PC-3 (cell line): ENCODE measurements at regions of chr12 and their contacts with region 1.

Region 1: DNA sequence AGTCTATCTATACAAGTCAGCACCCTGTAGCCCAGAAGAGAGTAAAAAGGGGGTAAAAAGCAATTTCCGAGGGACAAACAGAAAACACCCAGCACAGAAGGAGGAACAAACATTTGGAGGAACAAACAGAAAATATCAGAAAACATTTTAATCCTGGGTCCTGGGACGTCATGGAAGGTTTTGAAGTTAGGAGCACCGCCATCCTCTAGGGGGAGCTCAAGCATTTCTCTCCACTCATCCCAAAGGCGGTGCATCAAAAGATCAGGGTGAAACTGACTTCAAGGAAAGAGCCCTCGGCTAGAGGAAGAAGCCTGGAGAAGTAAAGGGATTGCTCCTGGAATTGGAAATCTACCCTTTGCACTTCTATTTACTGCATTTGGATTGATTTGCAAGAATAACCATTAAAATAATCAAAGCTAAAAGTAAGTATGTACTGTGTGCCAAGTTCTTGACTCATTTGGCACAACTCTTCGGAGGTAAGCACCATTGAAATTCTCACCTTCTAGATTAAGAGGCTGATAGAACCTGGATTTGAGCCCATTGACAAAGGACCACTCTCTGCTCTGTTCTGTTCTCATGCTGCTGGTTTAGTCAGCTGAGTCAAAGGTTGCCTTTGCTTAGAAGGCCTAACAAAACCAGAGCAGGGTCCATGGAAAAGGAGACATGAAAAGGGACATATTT is 17.2 kb upstream of the POC1B start:
- DNase-seq: peak; percentile 91
- ATAC-seq: peak; percentile 94
- H3K4me3 ChIP-seq: no peak overlapping the region
- H3K27ac ChIP-seq: peak overlapping the region; percentile 7
- H3K4me1 ChIP-seq: peaks cover 6% of the 10 kb centered on the region
- H3K27me3 ChIP-seq: no peaks in the 10 kb centered on the region
- CTCF ChIP-seq: peak; percentile 96

Region 2: DNA sequence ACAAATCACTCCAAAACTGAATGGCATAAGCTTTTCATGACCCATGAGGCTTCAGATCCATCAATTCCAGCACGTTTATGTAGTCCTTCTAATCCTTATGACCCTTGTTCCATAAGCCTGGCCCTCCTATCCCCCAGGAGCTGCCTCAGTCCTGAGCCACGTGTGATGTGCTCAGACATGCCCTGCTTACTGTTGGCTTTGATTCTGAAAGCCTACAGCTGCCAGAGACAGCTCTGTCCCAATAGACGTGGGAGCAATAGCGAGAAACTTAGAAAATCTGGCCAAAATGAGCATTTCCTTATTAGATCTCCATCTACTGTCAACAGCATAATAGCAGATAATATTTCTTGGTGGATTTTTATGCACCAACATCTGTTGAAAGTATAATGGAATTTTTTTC is 223.9 kb before region 1 on chr12:
- CTCF ChIA-PET with region 1: no interaction called
- POLR2A ChIA-PET with region 1: no interaction called
- intact Hi-C with region 1: no loop called
- DNase-seq: no peak
- ATAC-seq: no peak
- H3K4me3 ChIP-seq: no peak overlapping the region
- H3K27ac ChIP-seq: no peak overlapping the region
- H3K4me1 ChIP-seq: no peaks in the 10 kb centered on the region
- H3K27me3 ChIP-seq: no peaks in the 10 kb centered on the region
- CTCF ChIP-seq: no peak

Region 3: DNA sequence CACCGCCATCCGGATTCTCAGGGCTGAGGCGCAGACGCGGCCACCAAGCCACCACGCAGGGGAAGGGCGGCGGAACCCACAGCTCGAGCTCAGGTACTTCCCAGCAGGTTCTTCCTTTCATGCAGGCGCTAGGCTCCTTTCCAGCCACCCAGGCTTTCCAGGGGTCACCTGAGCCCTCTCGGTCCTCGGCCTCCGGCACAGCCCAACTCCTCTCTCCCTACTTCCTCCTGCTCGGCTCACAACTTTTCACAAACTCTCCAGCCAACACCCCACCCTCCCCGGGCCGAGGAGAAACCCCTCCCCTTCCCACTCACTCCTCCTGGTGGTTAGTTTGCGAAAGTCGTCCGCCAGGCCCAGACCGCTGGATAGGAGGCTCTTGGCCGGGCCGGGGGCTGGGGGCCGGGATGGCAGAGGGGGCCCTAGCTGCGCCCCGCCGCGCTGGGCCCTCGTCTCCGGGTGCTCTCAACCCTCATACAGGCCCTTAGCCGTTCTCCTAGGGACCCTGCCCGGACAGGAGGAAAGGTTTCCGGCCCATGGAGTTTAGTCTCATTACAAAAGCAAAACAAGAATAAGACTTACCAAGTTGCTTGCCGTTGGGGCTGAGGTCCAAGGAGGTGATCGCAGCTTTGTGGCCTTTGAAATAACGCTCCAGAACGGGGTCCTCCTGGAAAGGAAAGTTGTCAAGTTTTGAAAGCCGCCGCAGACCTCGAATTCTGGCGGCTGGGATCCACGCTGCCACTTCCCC is 18.3 kb before region 1 on chr12 and contains the start of gene GALNT4:
- CTCF ChIA-PET with region 1: no interaction called
- POLR2A ChIA-PET with region 1: no interaction called
- intact Hi-C with region 1: no loop called
- DNase-seq: peak; percentile 90
- ATAC-seq: peak; percentile 69
- H3K4me3 ChIP-seq: peak within 1 kb of the TSS; percentile 91
- H3K27ac ChIP-seq: peak within 1 kb of the TSS; percentile 81
- H3K4me1 ChIP-seq: peaks cover 48% of the 10 kb centered on the region
- H3K27me3 ChIP-seq: no peaks in the 10 kb centered on the region
- CTCF ChIP-seq: peak; percentile 75
- total RNA-seq, gene GALNT4: 6.8 and 8.1 TPM in 2 replicates

Region 4: GRCh38 chr12:89556976-89557375 is 13.9 kb after region 1 on chr12:
- CTCF ChIA-PET with region 1: no interaction called
- POLR2A ChIA-PET with region 1: no interaction called
- intact Hi-C with region 1: no loop called
- DNase-seq: peak; percentile 53
- ATAC-seq: peak; percentile 31; the same call in 1 of the 2 replicates
- H3K4me3 ChIP-seq: no peak overlapping the region
- H3K27ac ChIP-seq: no peak overlapping the region
- H3K4me1 ChIP-seq: no peaks in the 10 kb centered on the region; the same call in 1 of the 2 replicates
- H3K27me3 ChIP-seq: no peaks in the 10 kb centered on the region
- CTCF ChIP-seq: no peak

Region 5: GRCh38 chr12:89825591-89826449 is 282.8 kb after region 1 on chr12:
- CTCF ChIA-PET with region 1: no interaction called
- POLR2A ChIA-PET with region 1: no interaction called
- intact Hi-C with region 1: no loop called
- DNase-seq: peak; percentile 90
- ATAC-seq: peak; percentile 86
- H3K4me3 ChIP-seq: peak overlapping the region; percentile 13; the same call in 1 of the 2 replicates
- H3K27ac ChIP-seq: peak overlapping the region; percentile 72
- H3K4me1 ChIP-seq: peaks cover 23% of the 10 kb centered on the region
- H3K27me3 ChIP-seq: no peaks in the 10 kb centered on the region
- CTCF ChIP-seq: no peak

Region 6: GRCh38 chr12:90102957-90103652 is 560.1 kb after region 1 on chr12:
- CTCF ChIA-PET with region 1: no interaction called
- POLR2A ChIA-PET with region 1: no interaction called
- intact Hi-C with region 1: loop called (anchors 2 kb)
- DNase-seq: peak; percentile 61
- ATAC-seq: peak; percentile 73
- H3K4me3 ChIP-seq: no peak overlapping the region
- H3K27ac ChIP-seq: no peak overlapping the region
- H3K4me1 ChIP-seq: peaks cover 44% of the 10 kb centered on the region
- H3K27me3 ChIP-seq: no peaks in the 10 kb centered on the region
- CTCF ChIP-seq: peak; percentile 83

Region 7: DNA sequence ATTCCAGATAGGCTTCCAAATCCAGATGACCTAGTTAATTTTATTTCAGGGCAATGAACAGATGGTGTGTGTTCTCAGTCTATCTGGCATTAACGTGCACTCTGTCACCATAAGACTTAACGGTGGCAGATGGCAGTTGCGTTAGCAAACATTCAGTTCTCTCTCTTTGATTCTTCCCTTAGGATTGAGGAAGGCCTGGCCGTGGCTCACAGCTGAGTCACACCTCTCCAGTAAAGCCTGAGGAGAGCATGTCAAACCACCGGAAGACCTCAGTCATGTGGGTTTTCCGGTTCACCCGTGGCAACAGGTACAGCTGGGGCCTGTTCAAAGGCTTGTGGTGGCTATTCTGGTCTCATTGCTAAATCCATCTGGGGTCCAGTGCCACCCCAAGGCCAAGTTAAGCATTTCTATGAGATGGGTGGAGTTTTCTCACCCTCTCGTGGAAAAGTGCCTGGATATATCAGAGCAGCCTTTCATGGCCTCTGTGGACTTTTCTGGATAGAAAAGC is 710.7 kb after region 1 on chr12:
- CTCF ChIA-PET with region 1: no interaction called
- POLR2A ChIA-PET with region 1: no interaction called
- intact Hi-C with region 1: loop called (anchors 5 kb)
- DNase-seq: peak; percentile 98
- ATAC-seq: peak; percentile 100
- H3K4me3 ChIP-seq: no peak overlapping the region
- H3K27ac ChIP-seq: peak overlapping the region; percentile 68
- H3K4me1 ChIP-seq: peaks cover 26% of the 10 kb centered on the region
- H3K27me3 ChIP-seq: no peaks in the 10 kb centered on the region
- CTCF ChIP-seq: peak; percentile 74

Region 8: DNA sequence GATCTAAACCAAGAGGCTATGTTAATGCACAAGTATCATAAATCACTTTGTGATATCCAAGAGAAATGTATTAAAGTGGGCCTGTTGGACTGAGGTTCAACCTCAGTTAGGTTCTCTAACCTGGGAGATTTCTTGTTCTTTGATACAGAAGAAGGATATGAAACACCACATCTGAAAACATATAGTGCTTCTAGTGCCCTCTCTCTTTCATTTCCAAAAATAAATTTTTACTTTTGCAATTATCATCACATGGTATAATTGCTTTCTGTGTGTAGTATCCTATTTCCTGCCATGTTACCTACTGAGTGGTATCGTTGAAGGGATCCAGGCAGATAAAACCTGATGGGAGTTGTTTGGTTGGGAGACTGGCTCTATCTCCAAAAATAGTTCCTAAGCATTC is 1147.1 kb after region 1 on chr12:
- CTCF ChIA-PET with region 1: no interaction called
- POLR2A ChIA-PET with region 1: no interaction called
- intact Hi-C with region 1: loop called (anchors 5 kb)
- DNase-seq: no peak
- ATAC-seq: peak; percentile 35; the same call in 1 of the 2 replicates
- H3K4me3 ChIP-seq: no peak overlapping the region
- H3K27ac ChIP-seq: no peak overlapping the region
- H3K4me1 ChIP-seq: no peaks in the 10 kb centered on the region
- H3K27me3 ChIP-seq: no peaks in the 10 kb centered on the region
- CTCF ChIP-seq: no peak; the same call in 1 of the 2 replicates